ENCODE measurements at regions of chr3 and their contacts with region 1.

Region 1: GRCh38 chr3:12556671-12557472 is at the start of gene MKRN2:
- DNase-seq: peak; percentile 76
- H3K4me3 ChIP-seq: peak within 1 kb of the TSS; percentile 83 to 86
- H3K27ac ChIP-seq: peak within 1 kb of the TSS; percentile 90
- H3K4me1 ChIP-seq: peaks cover 4% of the 10 kb centered on the region
- H3K27me3 ChIP-seq: peaks cover 12% of the 10 kb centered on the region
- CTCF ChIP-seq: peak in 1 of 4 experiments; percentile 23
- POLR2A ChIP-seq: peak; percentile 94
- total RNA-seq, gene MKRN2: 22.2 to 54.5 TPM

Region 2: GRCh38 chr3:12489832-12490231 is 67.0 kb before region 1 on chr3:
- intact Hi-C with region 1: loop called (anchors 5 kb)
- DNase-seq: no peak
- H3K4me3 ChIP-seq: no peak overlapping the region
- H3K27ac ChIP-seq: no peak overlapping the region
- H3K4me1 ChIP-seq: no peaks in the 10 kb centered on the region
- H3K27me3 ChIP-seq: no peaks in the 10 kb centered on the region
- CTCF ChIP-seq: no peak
- POLR2A ChIP-seq: no peak

Region 3: GRCh38 chr3:12508291-12508700 is 48.6 kb before region 1 on chr3:
- intact Hi-C with region 1: no loop called
- DNase-seq: no peak
- H3K4me3 ChIP-seq: no peak overlapping the region
- H3K27ac ChIP-seq: peak overlapping the region in 1 of 2 donors; percentile 27
- H3K4me1 ChIP-seq: no peaks in the 10 kb centered on the region
- H3K27me3 ChIP-seq: no peaks in the 10 kb centered on the region
- CTCF ChIP-seq: no peak
- POLR2A ChIP-seq: no peak

Region 4: GRCh38 chr3:12663936-12664908 is 107.3 kb after region 1 on chr3 and contains the start of gene RAF1:
- intact Hi-C with region 1: loop called (anchors 5 kb)
- DNase-seq: peak; percentile 98
- H3K4me3 ChIP-seq: peak within 1 kb of the TSS; percentile 78 to 98
- H3K27ac ChIP-seq: peak within 1 kb of the TSS; percentile 98 to 99
- H3K4me1 ChIP-seq: peaks cover 2% of the 10 kb centered on the region
- H3K27me3 ChIP-seq: no peaks in the 10 kb centered on the region
- CTCF ChIP-seq: peak in 1 of 4 experiments; percentile 45
- POLR2A ChIP-seq: peak; percentile 90
- total RNA-seq, gene RAF1: 101 to 126 TPM

Region 5: GRCh38 chr3:12830785-12831156 is 273.9 kb after region 1 on chr3:
- intact Hi-C with region 1: loop called (anchors 10 kb)
- DNase-seq: no peak
- H3K4me3 ChIP-seq: no peak overlapping the region
- H3K27ac ChIP-seq: no peak overlapping the region
- H3K4me1 ChIP-seq: no peaks in the 10 kb centered on the region
- H3K27me3 ChIP-seq: no peaks in the 10 kb centered on the region
- CTCF ChIP-seq: no peak
- POLR2A ChIP-seq: no peak

Measured in prostate gland (tissue), 2 donors.